Mammary epithelial cell (primary cell): ENCODE measurements at regions of chr6 and their contacts with region 1.

Region 1: GRCh38 chr6:44058617-44059358 is 68.5 kb downstream of the MRPL14 start:
- DNase-seq: peak; percentile 99
- H3K4me3 ChIP-seq: no peak overlapping the region
- H3K27ac ChIP-seq: peak overlapping the region; percentile 95
- H3K4me1 ChIP-seq: peaks cover 89% of the 10 kb centered on the region
- H3K27me3 ChIP-seq: no peaks in the 10 kb centered on the region
- CTCF ChIP-seq: no peak

Region 2: GRCh38 chr6:43926634-43927524 is 131.9 kb before region 1 on chr6:
- CTCF ChIA-PET with region 1: no interaction called
- dilution Hi-C with region 1: no loop called
- in situ Hi-C with region 1: loop called in 1 of 2 experiments (anchors 10 kb)
- intact Hi-C with region 1: no loop called
- DNase-seq: peak; percentile 93
- H3K4me3 ChIP-seq: no peak overlapping the region
- H3K27ac ChIP-seq: peak overlapping the region; percentile 69
- H3K4me1 ChIP-seq: peaks cover 45% of the 10 kb centered on the region
- H3K27me3 ChIP-seq: no peaks in the 10 kb centered on the region
- CTCF ChIP-seq: peak; percentile 8 to 54

Region 3: GRCh38 chr6:44041461-44042260 is 17.1 kb before region 1 on chr6:
- CTCF ChIA-PET with region 1: no interaction called
- dilution Hi-C with region 1: no loop called
- in situ Hi-C with region 1: no loop called
- intact Hi-C with region 1: loop called (anchors 1 kb)
- DNase-seq: peak; percentile 96
- H3K4me3 ChIP-seq: no peak overlapping the region
- H3K27ac ChIP-seq: peak overlapping the region; percentile 73
- H3K4me1 ChIP-seq: peaks cover 54% of the 10 kb centered on the region
- H3K27me3 ChIP-seq: no peaks in the 10 kb centered on the region
- CTCF ChIP-seq: no peak